ENCODE measurements at regions of chr12 and their contacts with region 1.

Region 1: DNA sequence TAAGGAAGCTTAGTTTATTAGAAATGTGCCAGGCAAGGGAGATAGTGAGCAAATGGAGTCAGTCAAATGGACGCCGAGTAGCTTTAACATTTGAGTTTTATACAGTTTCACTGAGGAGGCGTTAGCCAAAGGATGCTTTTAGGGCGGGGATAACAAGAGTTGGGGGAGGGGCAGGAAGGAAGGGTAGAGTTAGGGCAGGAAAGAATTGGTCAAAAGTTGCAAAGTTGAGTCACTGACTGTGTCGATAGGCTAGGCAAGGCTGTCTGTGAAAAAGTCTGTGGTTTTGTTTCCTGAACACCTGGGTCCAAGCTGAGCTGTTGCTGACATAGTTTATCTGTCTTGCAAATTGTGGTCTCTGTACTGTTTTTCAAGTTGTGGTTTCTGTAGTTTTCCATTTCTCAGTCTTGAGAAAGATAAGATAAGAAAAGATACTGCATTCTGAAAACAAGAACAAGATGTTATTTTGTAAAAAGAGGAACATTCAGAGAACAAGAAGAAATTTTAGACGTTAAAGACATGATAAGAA is 62.6 kb upstream of the RESF1 start:
- DNase-seq: peak; percentile 92
- H3K4me3 Mint-ChIP-seq: peak overlapping the region; percentile 52
- H3K27ac Mint-ChIP-seq: peak overlapping the region; percentile 95
- H3K4me1 Mint-ChIP-seq: peaks cover 54% of the 10 kb centered on the region
- H3K27me3 Mint-ChIP-seq: no peaks in the 10 kb centered on the region

Region 2: DNA sequence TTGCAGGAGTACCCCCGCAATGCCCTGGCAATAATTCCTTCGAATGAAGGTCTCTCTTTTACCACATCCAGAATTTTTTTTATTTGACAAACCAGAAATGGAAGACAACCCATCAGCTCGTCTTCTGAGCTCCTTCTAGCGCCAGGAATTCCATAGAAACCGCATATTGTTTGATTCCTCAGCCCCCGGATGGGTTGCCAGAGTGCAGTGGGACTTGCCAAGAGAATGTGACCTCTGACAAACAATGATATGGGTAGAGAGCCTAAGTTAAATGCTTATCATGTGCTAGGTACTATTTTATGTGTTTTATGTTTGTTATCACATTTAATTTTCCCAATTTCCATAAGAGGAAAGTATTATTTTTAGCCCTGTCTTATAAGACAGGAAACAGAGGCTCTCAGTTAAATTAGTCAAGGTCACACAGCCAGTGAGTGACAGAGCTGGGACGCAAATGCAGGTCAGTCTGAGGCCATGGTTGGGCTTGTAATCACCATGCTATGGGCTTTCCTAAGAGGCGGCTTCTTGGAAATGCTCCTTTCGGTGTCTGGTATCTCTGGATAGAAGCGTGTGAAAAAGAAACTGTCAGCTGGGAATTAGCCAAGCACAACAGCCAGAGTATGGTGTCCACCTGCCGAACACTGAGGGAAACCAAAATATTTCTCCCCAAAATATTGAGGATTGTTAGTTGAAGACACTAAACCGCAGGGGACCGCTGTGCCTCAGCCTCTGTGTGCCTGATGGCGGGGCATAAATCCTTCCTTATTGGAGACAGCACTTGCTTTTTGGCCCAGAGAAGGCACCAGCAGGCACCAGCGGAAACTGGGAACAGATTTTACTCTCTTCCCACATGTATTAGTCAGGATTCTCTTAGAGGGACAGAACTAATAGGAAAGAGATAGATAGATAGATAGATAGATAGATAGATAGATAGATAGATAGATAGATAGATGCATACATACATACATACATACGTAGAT is 266.5 kb before region 1 on chr12:
- CTCF ChIA-PET with region 1: no interaction called
- POLR2A ChIA-PET with region 1: no interaction called
- intact Hi-C with region 1: no loop called
- DNase-seq: no peak
- H3K4me3 Mint-ChIP-seq: no peak overlapping the region
- H3K27ac Mint-ChIP-seq: no peak overlapping the region
- H3K4me1 Mint-ChIP-seq: no peaks in the 10 kb centered on the region
- H3K27me3 Mint-ChIP-seq: peaks cover 1% of the 10 kb centered on the region

Region 3: DNA sequence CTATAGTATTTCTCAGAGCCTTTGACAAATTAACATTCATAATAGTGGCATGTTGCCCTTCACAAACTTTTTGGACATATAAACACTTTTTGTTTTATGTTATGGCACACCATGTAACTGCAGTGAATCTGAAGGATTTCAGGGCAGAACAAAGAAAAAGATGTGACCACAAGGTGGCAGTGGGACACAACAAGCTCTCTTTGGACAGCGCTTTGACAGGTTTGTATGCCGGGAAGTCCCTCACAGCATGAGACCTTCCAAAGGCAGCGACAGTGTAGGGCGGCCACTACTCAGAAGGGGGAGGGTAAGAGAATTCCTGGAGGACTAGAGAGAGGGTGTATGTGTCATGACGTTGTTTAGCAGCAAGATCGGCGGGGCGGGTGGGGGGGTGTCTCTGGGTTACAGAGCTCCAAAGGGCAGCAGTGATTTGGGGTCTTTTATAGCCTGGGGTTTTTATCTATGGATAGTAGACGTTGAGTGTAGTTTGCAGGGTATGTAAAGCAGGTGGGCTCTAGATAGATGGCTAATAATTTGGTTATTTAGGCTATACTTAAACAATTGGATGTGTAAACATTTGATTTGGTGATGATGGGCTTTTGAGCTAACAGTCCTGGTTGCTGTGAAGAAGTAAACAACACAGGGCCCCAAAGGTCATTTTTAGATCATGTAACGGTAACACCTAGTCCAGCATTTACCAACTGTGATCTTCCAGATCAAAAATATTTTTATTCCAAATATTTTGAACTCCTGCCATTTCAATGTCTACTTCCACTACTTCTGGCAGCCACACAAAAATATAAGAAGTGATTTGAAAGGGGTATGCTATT is 214.2 kb before region 1 on chr12:
- CTCF ChIA-PET with region 1: no interaction called
- POLR2A ChIA-PET with region 1: interaction called, 3 read pairs
- intact Hi-C with region 1: loop called (anchors 5 kb)
- DNase-seq: peak; percentile 77
- H3K4me3 Mint-ChIP-seq: no peak overlapping the region
- H3K27ac Mint-ChIP-seq: peak overlapping the region; percentile 44
- H3K4me1 Mint-ChIP-seq: peaks cover 9% of the 10 kb centered on the region
- H3K27me3 Mint-ChIP-seq: no peaks in the 10 kb centered on the region

Region 4: DNA sequence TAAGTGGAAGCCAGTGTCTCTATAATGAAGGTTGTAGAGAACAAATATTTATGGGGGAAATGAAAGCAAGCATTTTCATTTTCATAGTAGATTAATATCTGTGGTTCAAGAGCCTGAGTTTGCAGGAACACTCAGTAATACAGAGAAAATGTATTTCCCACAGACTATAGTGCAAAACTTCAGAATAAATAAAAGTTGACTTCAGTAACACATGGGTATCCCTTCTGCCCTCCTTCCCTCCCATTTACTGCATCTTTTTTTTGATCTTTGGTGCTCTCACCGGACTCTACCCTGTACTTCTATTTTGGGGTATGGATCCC is 92.4 kb before region 1 on chr12:
- CTCF ChIA-PET with region 1: no interaction called
- POLR2A ChIA-PET with region 1: no interaction called
- intact Hi-C with region 1: loop called (anchors 1 kb)
- DNase-seq: no peak
- H3K4me3 Mint-ChIP-seq: peak overlapping the region; percentile 66
- H3K27ac Mint-ChIP-seq: peak overlapping the region; percentile 79
- H3K4me1 Mint-ChIP-seq: peaks cover 47% of the 10 kb centered on the region
- H3K27me3 Mint-ChIP-seq: no peaks in the 10 kb centered on the region

Region 5: GRCh38 chr12:31874961-31875608 is 21.5 kb before region 1 on chr12:
- CTCF ChIA-PET with region 1: no interaction called
- POLR2A ChIA-PET with region 1: interaction called, 4 read pairs
- intact Hi-C with region 1: loop called (anchors 1 kb)
- DNase-seq: peak; percentile 86
- H3K4me3 Mint-ChIP-seq: peak overlapping the region; percentile 47
- H3K27ac Mint-ChIP-seq: peak overlapping the region; percentile 97
- H3K4me1 Mint-ChIP-seq: peaks cover 27% of the 10 kb centered on the region
- H3K27me3 Mint-ChIP-seq: no peaks in the 10 kb centered on the region

Region 6: DNA sequence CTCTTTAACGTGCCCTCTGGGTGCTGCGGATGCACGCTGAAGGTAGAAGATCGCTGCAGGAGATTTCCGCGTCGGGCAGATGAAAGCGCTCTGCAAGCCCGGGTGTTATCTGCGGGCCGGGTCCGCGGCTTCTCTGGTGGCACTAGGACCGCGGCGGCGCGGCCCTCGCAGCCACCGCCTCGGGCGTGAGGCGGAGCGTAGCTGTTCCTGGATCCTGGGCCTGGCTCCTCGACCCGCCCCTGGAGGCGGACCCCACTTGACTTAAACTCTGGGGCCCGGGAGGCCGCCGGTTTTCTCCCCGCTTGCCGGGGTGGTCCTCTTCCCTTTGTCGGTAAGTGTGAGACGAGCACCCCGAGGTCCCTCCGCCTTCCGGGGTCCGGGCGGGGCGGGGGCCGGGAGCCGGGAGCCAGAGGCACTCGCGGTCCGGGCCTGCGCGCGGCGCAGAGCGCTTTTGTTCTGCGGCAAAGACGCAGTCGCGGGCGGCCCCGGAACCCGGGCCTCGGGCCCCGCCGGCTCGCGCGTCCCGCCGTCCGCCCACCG is 62.7 kb after region 1 on chr12 and contains the start of gene RESF1:
- CTCF ChIA-PET with region 1: interaction called, 3 read pairs
- POLR2A ChIA-PET with region 1: interaction called, 7 read pairs
- intact Hi-C with region 1: loop called (anchors 2 kb)
- DNase-seq: peak; percentile 90
- H3K4me3 Mint-ChIP-seq: peak within 1 kb of the TSS; percentile 95
- H3K27ac Mint-ChIP-seq: peak within 1 kb of the TSS; percentile 97
- H3K4me1 Mint-ChIP-seq: peaks cover 68% of the 10 kb centered on the region
- H3K27me3 Mint-ChIP-seq: no peaks in the 10 kb centered on the region
- total RNA-seq, gene RESF1: 62.4 to 67.0 TPM

Region 7: DNA sequence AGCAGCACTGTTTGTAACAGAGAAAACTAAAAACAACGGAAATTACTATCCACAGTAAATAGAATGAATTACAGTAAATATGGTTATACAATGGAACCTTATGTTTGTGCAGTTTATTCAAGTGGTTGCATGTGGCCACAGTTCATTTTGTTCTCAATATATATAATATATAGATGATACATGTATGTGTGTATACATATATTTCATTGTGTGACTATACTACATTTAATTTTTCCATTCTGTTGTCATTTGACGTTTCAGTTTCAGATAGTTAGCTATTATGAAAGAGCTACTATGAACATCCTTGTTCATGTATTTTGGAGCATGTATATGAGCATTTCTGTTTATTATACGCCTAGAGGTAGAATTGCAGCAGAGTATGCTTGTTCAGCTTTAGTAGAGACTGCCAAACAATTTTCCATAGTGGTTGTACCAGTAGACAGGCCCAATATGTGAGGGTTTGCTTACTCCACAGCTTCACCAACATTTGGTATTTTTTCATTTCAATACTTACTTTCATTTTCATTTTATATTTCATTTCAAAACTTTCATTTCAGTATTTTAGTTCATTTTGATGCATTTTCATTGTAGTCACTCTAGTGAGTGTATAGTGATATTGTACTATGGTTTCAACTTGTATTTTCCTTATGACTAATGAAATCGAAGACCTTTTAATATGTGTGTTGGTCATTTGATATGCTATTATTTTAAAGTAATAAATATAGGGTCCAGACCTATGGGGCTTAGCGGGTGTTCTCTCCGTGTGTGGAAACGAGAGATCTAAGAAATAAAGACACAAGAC is 361.3 kb after region 1 on chr12:
- CTCF ChIA-PET with region 1: no interaction called
- POLR2A ChIA-PET with region 1: no interaction called
- intact Hi-C with region 1: loop called (anchors 1 kb)
- DNase-seq: no peak
- H3K4me3 Mint-ChIP-seq: no peak overlapping the region
- H3K27ac Mint-ChIP-seq: no peak overlapping the region
- H3K4me1 Mint-ChIP-seq: peaks cover 11% of the 10 kb centered on the region
- H3K27me3 Mint-ChIP-seq: no peaks in the 10 kb centered on the region

Measured in activated CD4-positive, alpha-beta memory T cell treated with anti-CD3 and anti-CD28 coated beads for 36 hours (primary cell).